ENCODE measurements at regions of chr15 and their contacts with region 1.

Region 1: DNA sequence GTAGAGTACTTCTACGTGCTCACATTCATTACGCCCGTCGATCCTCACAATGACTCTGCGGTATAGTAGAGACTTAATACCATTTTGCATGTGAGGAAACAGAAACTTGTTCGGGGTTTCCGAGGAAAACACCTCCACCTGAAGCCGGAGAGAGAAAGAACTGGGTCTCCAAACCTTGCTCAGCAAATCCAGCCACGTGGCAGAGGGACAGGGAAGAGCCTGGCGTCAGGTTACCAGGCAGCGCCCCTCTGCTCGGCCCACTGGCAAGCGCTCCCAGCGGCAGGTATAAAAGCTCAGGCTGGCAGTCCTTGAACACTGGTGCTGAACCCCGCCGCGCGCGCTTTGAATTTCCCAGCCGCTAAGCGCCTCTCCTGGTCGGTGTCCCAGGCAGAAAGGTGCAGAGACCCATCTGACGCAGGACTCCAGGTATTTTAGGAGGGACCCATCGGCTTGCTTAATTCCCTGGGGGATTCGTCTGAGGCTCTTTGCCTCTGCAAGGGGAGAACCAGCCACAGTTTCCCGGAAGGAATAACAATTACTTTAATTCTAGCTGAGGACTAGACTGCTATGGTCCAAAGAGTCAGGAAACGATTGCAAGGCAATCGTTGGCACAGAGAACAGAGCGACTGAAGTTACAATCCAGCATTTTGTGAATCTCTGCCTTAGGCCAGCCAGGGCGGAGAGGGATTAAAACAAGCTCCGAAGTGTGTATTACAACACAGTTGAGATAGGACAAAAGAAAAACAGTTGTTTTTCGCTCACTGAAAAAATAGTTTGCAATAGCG is at the start of gene C2CD4A:
- DNase-seq: peak; percentile 27 to 72
- ATAC-seq: peak; percentile 57 to 69
- H3K4me3 ChIP-seq: peak within 1 kb of the TSS; percentile 58
- H3K27ac ChIP-seq: peak within 1 kb of the TSS; percentile 70 to 80; a peak in 5 of 6 replicates
- H3K4me1 ChIP-seq: peaks cover 26% of the 10 kb centered on the region
- CTCF ChIP-seq: no peak
- EP300 ChIP-seq: no peak
- POLR2A ChIP-seq: no peak
- RAD21 ChIP-seq: no peak
- polyA plus RNA-seq, gene C2CD4A: 0.04 TPM in 1 of 2 replicates, not detected in the other

Region 2: GRCh38 chr15:61890106-61890505 is 176.7 kb before region 1 on chr15:
- CTCF ChIA-PET with region 1: no interaction called
- POLR2A ChIA-PET with region 1: no interaction called
- DNase-seq: peak in 1 of 2 experiments; percentile 13
- ATAC-seq: no peak
- H3K4me3 ChIP-seq: no peak overlapping the region
- H3K27ac ChIP-seq: no peak overlapping the region
- H3K4me1 ChIP-seq: peaks cover 9% of the 10 kb centered on the region; the same call in 2 of the 3 replicates
- CTCF ChIP-seq: no peak
- EP300 ChIP-seq: no peak
- POLR2A ChIP-seq: no peak
- RAD21 ChIP-seq: no peak

Region 3: GRCh38 chr15:61951949-61952348 is 114.9 kb before region 1 on chr15:
- CTCF ChIA-PET with region 1: no interaction called
- POLR2A ChIA-PET with region 1: no interaction called
- DNase-seq: no peak
- ATAC-seq: no peak
- H3K4me3 ChIP-seq: no peak overlapping the region
- H3K27ac ChIP-seq: no peak overlapping the region
- H3K4me1 ChIP-seq: no peaks in the 10 kb centered on the region
- CTCF ChIP-seq: no peak
- EP300 ChIP-seq: no peak
- POLR2A ChIP-seq: no peak
- RAD21 ChIP-seq: no peak

Region 4: GRCh38 chr15:62083168-62084154 is 16.6 kb after region 1 on chr15:
- CTCF ChIA-PET with region 1: interaction called, 26 read pairs
- POLR2A ChIA-PET with region 1: no interaction called
- DNase-seq: no peak
- ATAC-seq: peak in 1 of 2 experiments; percentile 55; a peak in 2 of 6 replicates
- H3K4me3 ChIP-seq: no peak overlapping the region
- H3K27ac ChIP-seq: no peak overlapping the region
- H3K4me1 ChIP-seq: peaks cover 11% of the 10 kb centered on the region
- CTCF ChIP-seq: no peak; the same call in 2 of the 3 replicates
- EP300 ChIP-seq: no peak
- POLR2A ChIP-seq: no peak
- RAD21 ChIP-seq: peak; percentile 24 to 39; a peak in 3 of 5 replicates

Region 5: DNA sequence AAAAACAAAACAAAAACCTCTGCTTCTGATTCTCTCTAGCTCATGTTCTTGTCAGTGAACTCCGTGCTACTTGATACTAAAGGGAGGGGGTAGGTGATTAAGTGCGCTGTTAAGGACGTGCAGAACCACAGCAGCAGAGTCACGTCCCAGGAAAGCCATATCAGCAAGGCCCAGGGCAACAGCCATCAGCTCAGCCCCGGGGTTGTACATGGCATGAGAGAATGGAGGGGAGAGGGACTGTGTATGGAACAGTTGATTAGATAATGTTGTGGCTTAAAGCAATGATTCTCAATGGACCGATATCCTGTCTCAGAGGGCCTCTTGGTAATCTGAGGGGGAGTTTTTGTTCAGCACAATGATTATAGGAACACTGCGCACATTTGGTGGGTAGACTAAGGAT is 27.5 kb after region 1 on chr15:
- CTCF ChIA-PET with region 1: interaction called, 30 read pairs
- POLR2A ChIA-PET with region 1: no interaction called
- DNase-seq: no peak
- ATAC-seq: no peak
- H3K4me3 ChIP-seq: no peak overlapping the region
- H3K27ac ChIP-seq: no peak overlapping the region
- H3K4me1 ChIP-seq: peaks cover 5% of the 10 kb centered on the region; the same call in 1 of the 3 replicates
- CTCF ChIP-seq: no peak
- EP300 ChIP-seq: no peak
- POLR2A ChIP-seq: no peak
- RAD21 ChIP-seq: no peak

Region 6: GRCh38 chr15:62104401-62104800 is 37.5 kb after region 1 on chr15:
- CTCF ChIA-PET with region 1: interaction called, 10 read pairs
- POLR2A ChIA-PET with region 1: no interaction called
- DNase-seq: no peak
- ATAC-seq: no peak
- H3K4me3 ChIP-seq: no peak overlapping the region
- H3K27ac ChIP-seq: 0 out of 6 replicates have a peak overlapping the region, but pooled peaks of 1 of the 2 experiments have one; percentile 14
- H3K4me1 ChIP-seq: peaks cover 16% of the 10 kb centered on the region
- CTCF ChIP-seq: no peak
- EP300 ChIP-seq: no peak
- POLR2A ChIP-seq: no peak
- RAD21 ChIP-seq: no peak

Region 7: DNA sequence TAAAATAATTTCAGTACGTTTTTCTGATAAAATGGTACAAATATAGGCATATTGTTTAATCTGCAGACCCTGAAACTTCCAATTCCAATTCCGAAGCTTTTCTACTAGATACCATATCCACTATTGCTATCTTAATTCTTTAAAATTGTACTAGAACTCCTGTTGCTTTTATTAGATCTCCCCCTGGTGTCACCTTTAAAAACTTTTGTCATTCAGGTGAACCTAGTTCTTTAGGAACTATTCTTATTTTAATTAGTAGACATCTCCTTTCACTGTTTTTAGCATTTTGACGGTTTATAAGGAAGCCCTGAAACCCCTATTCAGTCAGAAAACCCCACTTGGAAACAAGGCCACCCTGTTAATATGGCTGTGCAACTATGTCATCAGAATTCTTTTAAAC is 75.9 kb after region 1 on chr15:
- CTCF ChIA-PET with region 1: interaction called, 16 read pairs
- POLR2A ChIA-PET with region 1: no interaction called
- DNase-seq: no peak
- ATAC-seq: no peak
- H3K4me3 ChIP-seq: no peak overlapping the region
- H3K27ac ChIP-seq: no peak overlapping the region; a peak in 1 of 6 replicates
- H3K4me1 ChIP-seq: 0 out of 3 replicates have a peak, but pooled peaks cover 6% of the 10 kb centered on the region
- CTCF ChIP-seq: peak; percentile 43
- EP300 ChIP-seq: no peak
- POLR2A ChIP-seq: no peak
- RAD21 ChIP-seq: peak; percentile 59 to 61

Region 8: DNA sequence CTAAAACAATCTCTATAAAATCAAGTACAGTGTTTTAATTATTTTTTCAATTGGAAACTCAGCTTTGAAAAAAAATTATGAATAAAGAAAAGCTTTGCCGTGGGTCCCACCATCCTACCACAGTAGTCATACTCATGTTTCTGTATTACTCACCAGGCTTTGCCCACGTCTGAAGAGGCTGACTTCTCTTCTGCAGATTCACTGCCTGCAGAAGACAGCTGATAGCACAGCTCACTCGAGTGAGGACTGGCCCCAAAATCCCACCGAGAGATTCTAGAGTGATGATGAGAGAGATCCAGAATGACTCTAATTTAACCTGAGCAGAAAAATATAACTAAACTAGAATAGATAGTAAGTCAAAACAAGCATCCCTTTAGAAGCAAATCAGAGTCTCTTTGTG is 86.4 kb after region 1 on chr15:
- CTCF ChIA-PET with region 1: no interaction called
- POLR2A ChIA-PET with region 1: no interaction called
- DNase-seq: no peak
- ATAC-seq: no peak
- H3K4me3 ChIP-seq: no peak overlapping the region
- H3K27ac ChIP-seq: no peak overlapping the region
- H3K4me1 ChIP-seq: no peaks in the 10 kb centered on the region
- CTCF ChIP-seq: no peak
- EP300 ChIP-seq: no peak
- POLR2A ChIP-seq: no peak
- RAD21 ChIP-seq: no peak